BJ (cell line): ENCODE measurements at regions of chr4 and their contacts with region 1.

Region 1: DNA sequence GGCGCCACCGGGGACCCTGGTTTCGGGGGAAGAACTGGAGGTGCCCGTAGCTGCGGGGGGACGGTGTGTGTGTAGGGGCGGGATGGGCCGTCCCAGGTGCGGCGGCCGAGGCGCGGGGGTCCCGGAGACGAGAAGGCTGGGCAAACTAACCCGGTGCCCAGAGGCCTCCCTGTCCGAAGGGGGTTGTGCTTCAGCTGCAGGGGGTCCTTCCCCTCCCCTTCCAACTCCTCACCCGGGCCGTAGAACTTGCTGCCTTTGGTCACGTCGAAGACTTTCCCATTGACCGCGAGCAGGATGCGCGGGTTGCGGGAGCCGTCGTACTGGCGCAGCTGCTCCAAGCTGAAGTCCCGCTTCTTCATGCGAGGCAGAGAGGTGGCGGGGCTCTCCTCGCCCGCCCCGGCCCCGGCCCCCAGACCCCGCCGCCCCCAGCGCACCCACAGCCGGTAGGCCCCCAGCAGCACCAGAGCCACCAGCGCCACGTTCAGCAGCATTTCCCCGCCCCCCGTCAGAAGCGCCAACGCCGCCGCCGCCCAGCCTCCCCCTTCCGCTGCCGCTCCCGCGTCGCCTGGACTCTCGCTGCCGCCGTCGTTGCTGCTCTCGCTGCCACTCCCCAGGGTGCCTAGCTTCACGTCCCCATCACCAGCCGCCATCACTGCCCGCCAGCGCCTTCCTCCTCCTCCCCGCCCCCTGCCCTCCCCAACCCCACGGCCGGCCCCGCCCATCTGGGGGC is at the start of gene PGRMC2:
- DNase-seq: no peak
- H3K4me3 ChIP-seq: peak within 1 kb of the TSS; percentile 93
- H3K27me3 ChIP-seq: no peaks in the 10 kb centered on the region
- CTCF ChIP-seq: no peak
- polyA plus RNA-seq, gene PGRMC2: 15.9 and 24.8 TPM in 2 replicates

Region 2: DNA sequence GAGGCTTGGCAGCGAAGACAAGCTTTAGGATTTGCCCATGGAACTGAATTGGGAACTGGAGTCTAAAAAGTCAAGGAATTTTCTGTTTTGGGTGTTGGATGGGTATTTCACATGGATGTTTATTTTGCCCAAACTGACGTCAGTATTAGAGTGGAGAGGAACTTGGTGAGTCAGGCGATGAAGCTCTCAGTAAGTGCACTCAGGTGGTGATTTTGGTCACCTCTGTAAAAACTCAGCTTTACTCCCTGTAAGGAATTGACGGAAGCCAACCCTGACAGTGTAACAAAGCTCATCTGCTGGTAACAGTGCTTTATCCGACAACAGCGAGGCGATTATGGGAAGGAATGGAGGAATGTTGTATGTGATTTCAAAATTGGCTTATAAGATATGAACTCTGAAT is 77.3 kb after region 1 on chr4:
- CTCF ChIA-PET with region 1: no interaction called
- POLR2A ChIA-PET with region 1: interaction called, 12 read pairs
- DNase-seq: no peak
- H3K4me3 ChIP-seq: no peak overlapping the region
- H3K27me3 ChIP-seq: no peaks in the 10 kb centered on the region
- CTCF ChIP-seq: no peak

Region 3: GRCh38 chr4:128384091-128384841 is 97.0 kb after region 1 on chr4:
- CTCF ChIA-PET with region 1: interaction called, 3 read pairs
- POLR2A ChIA-PET with region 1: interaction called, 14 read pairs
- DNase-seq: peak; percentile 92
- H3K4me3 ChIP-seq: no peak overlapping the region
- H3K27me3 ChIP-seq: no peaks in the 10 kb centered on the region
- CTCF ChIP-seq: no peak

Region 4: DNA sequence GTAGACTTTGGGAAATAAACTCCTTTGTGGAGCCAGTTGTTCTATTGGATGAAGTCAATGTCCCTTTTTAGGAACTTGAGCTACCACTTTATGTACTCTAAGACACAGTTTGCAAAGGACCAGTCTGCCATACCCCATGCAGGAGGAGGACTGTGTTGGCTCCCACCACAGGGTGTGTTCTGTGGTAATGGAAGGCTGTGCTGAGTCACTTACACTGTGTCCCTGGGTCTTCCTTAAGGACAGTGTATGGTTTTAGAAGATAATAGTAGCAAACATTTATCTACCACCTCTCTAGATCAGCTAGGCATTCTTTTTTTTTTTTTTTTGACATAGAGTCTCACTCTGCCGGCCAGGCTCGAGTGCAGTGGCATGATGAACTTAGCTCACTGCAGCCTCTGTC is 184.3 kb after region 1 on chr4:
- CTCF ChIA-PET with region 1: no interaction called
- POLR2A ChIA-PET with region 1: interaction called, 12 read pairs
- DNase-seq: no peak
- H3K4me3 ChIP-seq: no peak overlapping the region
- H3K27me3 ChIP-seq: no peaks in the 10 kb centered on the region
- CTCF ChIP-seq: no peak